Right ventricle myocardium superior (tissue), 1 donor: ENCODE measurements at regions of chr9 and their contacts with region 1.

Region 1: DNA sequence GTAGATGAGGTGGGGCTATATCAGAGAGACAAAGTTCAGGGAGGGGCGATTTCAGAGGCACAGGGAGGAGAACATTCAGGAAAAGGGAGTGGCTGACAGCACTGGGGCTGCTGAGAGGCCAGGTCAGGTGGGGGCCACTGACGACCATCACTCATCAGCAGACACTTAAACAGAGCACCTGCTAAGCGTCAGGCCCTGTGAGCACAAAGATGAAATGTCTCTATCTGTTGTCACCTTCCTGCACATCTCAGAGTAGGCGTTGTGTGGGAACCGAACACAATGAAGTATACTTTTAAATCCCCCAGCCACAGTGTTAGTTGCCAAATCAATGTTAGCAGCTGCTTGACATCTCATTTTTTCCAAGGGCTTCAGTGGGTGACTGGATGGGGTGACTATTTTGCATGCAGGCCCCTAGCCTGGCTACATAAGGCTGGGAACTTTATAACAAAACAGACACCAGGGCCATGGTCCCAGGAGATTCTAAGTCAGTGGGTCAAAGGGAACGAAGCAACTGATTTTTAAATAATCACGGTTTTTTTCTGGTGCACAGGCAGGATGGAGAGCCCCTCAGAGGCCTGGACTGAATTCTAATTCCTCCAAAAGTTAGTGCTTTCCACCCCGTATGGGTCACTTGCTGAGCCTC is 31.1 kb upstream of the ANKRD18A start:
- DNase-seq: peak; percentile 52
- ATAC-seq: peak; percentile 66

Region 2: DNA sequence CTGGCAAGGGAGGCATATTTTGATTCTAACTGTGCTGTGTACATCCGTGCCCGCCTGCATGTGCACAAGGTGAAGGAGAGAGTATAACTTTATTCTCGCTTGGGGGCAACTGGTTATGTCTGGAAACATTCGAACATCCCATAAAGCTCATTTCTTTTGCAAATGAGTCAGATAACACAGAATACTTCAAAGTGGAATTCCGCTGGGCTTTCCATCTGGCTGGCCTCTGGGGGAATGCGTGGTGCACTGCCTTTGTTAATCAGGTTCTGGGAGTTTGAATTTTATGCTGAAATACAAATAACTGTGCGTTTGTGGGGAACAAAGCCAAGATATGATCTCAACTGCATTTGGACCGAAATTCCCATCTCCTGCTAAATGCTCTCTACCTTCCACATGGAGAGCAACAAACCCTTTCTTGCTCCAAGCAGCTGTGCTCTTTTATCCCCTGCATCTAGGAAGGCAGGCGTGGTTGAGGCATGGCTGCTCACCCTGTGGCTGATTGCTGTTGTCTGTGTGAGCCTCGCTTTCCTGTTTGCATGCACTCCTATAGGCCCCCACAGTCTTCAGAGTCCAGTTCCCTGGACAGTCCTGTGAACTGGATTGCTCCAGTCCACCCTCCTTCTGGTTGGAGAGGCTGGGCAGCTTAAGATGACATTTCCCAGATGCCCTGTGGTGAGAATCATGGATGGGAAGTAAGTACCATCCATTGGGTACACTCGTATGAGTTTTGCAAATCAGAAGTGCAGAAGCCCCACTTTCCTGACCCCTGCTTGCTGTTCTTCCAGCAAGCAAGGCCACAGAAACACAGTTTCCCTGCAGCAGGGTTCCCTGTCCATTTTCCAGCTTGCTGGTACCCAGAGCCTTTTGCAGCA is 342.0 kb before region 1 on chr9:
- intact Hi-C with region 1: no loop called
- DNase-seq: no peak
- ATAC-seq: no peak

Region 3: DNA sequence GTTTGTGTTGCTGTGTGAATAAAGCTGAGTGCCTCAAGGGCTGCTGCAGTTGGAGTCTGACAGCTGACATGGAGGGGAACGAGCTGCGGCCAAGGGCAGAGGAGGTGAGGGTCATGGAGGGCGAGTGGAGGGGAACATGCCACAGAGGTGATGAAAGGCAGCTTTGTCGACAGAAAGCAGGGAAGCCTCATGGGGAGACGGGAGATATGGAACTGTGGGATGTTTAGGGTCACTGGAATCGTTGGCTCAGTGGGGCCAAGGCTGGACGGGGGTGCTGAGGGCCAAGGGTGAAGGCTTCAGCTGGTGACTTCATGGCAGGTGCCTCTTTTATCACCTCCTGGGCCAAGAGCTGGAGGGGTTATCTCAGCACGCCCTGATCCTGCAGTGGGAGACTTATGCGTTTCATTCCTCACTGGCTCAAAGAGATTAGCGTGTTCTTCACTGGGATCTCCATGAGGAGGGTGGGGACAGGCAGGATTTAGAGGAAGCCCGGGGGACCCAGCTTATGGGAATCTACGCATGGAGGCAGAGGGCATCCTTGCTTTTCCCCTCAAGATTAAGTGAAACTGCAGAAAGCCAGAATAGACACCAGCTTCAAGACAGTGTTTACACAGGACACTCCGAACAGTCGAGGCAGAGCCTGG is 26.3 kb after region 1 on chr9:
- intact Hi-C with region 1: loop called (anchors 2 kb)
- DNase-seq: peak; percentile 70
- ATAC-seq: peak; percentile 93